Activated naive CD4-positive, alpha-beta T cell treated with anti-CD3 and anti-CD28 coated beads for 36 hours (primary cell): ENCODE measurements at regions of chr6 and their contacts with region 1.

Region 1: DNA sequence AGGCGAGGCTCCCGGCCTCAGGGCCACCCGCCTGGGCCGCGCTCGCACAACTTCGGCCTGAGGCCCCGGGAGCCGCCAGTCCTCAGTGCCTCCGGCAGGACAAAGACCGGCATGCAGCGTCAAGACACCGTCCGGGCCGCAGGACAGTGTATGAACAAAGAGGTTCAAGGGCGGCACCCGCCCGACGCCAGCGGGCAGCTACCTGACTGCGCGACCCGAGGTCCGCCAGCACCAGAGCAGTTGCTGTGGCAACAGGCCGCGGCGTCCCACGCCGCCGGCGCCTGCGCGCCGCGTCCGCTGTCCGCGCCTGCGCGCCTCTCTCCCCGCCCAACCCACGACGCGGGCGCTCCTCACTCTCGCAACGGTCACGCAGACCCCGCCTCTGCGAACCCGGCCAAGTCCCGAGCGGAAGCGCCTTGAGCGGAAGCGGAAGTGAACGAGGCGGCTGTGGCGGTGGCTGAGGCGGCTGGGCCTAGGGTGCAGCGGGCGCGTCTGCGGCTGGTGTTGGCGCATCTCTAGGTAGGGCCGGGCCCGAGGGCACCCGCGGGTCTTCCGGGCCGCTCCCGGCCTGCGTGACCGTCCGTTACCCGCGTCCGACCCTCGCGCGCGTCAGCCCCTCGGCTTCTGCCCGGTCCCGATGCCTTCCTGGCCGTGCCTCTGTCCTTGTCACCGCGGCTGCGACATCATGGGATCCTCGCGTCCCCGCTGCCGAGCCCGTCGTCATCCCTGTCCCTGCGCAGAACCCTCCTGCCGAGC is at the start of gene FAM120B:
- DNase-seq: peak; percentile 92
- H3K4me3 Mint-ChIP-seq: peak within 1 kb of the TSS; percentile 86
- H3K27ac Mint-ChIP-seq: peak within 1 kb of the TSS; percentile 81
- H3K4me1 Mint-ChIP-seq: peaks cover 36% of the 10 kb centered on the region
- H3K27me3 Mint-ChIP-seq: peaks cover 4% of the 10 kb centered on the region
- total RNA-seq, gene FAM120B: 15.5 to 16.1 TPM

Region 2: DNA sequence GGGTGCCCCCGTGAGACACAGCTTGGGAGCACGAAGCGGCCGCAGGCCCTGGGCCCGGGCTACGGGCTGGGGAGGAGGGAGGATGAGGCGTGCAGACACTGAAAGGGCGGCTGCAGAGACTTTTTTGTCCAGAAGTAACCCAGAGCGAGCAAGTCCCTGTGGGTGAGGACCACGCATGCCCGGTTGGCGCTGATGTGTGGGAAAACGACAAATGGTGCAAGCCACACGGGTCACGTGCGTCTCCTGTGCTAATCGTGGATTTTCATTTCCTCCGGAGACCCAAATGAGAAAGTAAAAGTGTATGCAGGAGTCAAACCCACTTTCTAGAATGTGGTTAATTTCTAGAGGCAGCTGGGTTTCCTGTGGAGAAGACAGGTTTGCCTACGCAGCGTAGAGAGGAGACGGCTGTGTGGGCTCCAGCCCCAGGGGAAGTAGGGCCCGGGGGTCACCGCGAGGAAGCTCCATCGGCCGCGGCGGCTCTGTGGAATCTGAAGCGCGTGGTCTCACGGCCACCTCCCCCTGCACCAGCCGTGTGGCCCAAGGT is 34.7 kb before region 1 on chr6:
- CTCF ChIA-PET with region 1: no interaction called
- intact Hi-C with region 1: loop called (anchors 1 kb)
- DNase-seq: peak; percentile 91
- H3K4me3 Mint-ChIP-seq: peak overlapping the region; percentile 70
- H3K27ac Mint-ChIP-seq: peak overlapping the region; percentile 78
- H3K4me1 Mint-ChIP-seq: peaks cover 11% of the 10 kb centered on the region
- H3K27me3 Mint-ChIP-seq: no peaks in the 10 kb centered on the region

Region 3: GRCh38 chr6:170371588-170371987 is 65.1 kb after region 1 on chr6:
- CTCF ChIA-PET with region 1: no interaction called
- intact Hi-C with region 1: loop called (anchors 2 kb)
- DNase-seq: no peak
- H3K4me3 Mint-ChIP-seq: no peak overlapping the region
- H3K27ac Mint-ChIP-seq: peak overlapping the region; percentile 67
- H3K4me1 Mint-ChIP-seq: peaks cover 14% of the 10 kb centered on the region
- H3K27me3 Mint-ChIP-seq: no peaks in the 10 kb centered on the region